ENCODE measurements at regions of chr21 and their contacts with region 1.

Region 1: GRCh38 chr21:15764878-15765277 is 35.1 kb downstream of the USP25 start:
- DNase-seq: no peak
- ATAC-seq: no peak
- H3K4me3 ChIP-seq: no peak overlapping the region
- H3K4me3 Mint-ChIP-seq: no peak overlapping the region
- H3K27ac ChIP-seq: no peak overlapping the region
- H3K27ac Mint-ChIP-seq: no peak overlapping the region
- H3K4me1 ChIP-seq: peaks cover 0 to 6% of the 10 kb centered on the region in 2 experiments
- H3K4me1 Mint-ChIP-seq: peaks cover 69 to 73% (median 72%) of the 10 kb centered on the region in 3 donors
- H3K27me3 ChIP-seq: no peaks in the 10 kb centered on the region
- H3K27me3 Mint-ChIP-seq: no peaks in the 10 kb centered on the region

Region 2: GRCh38 chr21:14620152-14620551 is 1144.7 kb before region 1 on chr21:
- CTCF ChIA-PET with region 1: no interaction called
- POLR2A ChIA-PET with region 1: no interaction called
- DNase-seq: no peak
- ATAC-seq: no peak
- H3K4me3 ChIP-seq: no peak overlapping the region
- H3K4me3 Mint-ChIP-seq: no peak overlapping the region
- H3K27ac ChIP-seq: no peak overlapping the region
- H3K27ac Mint-ChIP-seq: no peak overlapping the region
- H3K4me1 ChIP-seq: no peaks in the 10 kb centered on the region
- H3K4me1 Mint-ChIP-seq: peaks cover 0 to 2% (median 0%) of the 10 kb centered on the region in 3 donors
- H3K27me3 ChIP-seq: no peaks in the 10 kb centered on the region
- H3K27me3 Mint-ChIP-seq: no peaks in the 10 kb centered on the region

Region 3: DNA sequence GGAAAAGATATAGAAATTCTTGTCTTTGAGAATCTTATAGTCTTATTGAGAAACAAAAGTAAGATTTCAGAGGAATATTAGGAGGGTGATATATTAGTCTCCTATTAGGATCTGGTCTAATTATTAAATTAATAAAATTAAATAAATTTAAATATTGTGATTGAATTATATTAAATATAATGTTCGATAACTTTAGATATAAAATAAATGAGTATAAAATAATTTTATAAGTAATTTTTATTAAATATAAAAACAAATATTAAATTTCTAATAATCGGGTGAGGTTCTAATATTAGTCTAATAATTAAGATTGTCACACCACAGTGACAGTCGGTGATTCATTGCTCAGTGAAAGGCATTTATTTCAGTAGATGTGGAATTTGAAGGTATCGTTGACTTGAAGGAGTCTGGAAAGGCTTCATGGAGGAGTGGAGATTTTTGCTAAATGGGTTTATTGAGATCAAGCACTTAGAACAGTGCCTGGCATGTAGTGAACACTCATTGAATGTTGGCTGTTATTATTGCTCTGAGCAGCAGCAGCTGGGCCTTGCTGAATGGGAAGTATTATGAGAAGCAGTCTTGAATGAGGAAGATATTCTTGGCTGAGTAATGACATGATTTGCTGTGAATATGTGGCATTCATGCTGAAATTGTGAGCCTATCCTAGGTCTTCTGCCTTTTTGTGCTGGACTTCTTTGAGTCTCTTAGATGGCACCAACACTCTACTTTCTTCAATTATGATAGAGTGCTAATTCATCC is 39.5 kb after region 1 on chr21:
- CTCF ChIA-PET with region 1: interaction called in 1 of 2 experiments, 3 read pairs
- POLR2A ChIA-PET with region 1: interaction called in 1 of 2 experiments, 12 read pairs
- DNase-seq: no peak
- ATAC-seq: no peak
- H3K4me3 ChIP-seq: no peak overlapping the region
- H3K4me3 Mint-ChIP-seq: no peak overlapping the region
- H3K27ac ChIP-seq: no peak overlapping the region
- H3K27ac Mint-ChIP-seq: peak overlapping the region in 1 of 2 donors; percentile 41
- H3K4me1 ChIP-seq: no peaks in the 10 kb centered on the region
- H3K4me1 Mint-ChIP-seq: peaks cover 23 to 31% (median 28%) of the 10 kb centered on the region in 3 donors
- H3K27me3 ChIP-seq: no peaks in the 10 kb centered on the region
- H3K27me3 Mint-ChIP-seq: no peaks in the 10 kb centered on the region

Measured in T-cell (primary cell).